ENCODE measurements at regions of chr22 and their contacts with region 1.

Region 1: GRCh38 chr22:50030297-50031188 is 18.0 kb upstream of the IL17REL start:
- DNase-seq: peak; percentile 57 to 82 (median 76)
- H3K4me3 ChIP-seq: no peak overlapping the region
- H3K27ac ChIP-seq: no peak overlapping the region
- H3K4me1 ChIP-seq: no peaks in the 10 kb centered on the region
- H3K27me3 ChIP-seq: no peaks in the 10 kb centered on the region
- CTCF ChIP-seq: peak; percentile 74 to 94 (median 88)
- POLR2A ChIP-seq: no peak

Region 2: GRCh38 chr22:49767355-49768062 is 263.0 kb before region 1 on chr22:
- intact Hi-C with region 1: loop called in 1 of 2 experiments (anchors 10 kb)
- DNase-seq: peak in 3 of 7 donors; percentile 23 to 51 (median 33)
- H3K4me3 ChIP-seq: no peak overlapping the region
- H3K27ac ChIP-seq: no peak overlapping the region
- H3K4me1 ChIP-seq: peaks cover 0 to 5% of the 10 kb centered on the region in 2 donors
- H3K27me3 ChIP-seq: no peaks in the 10 kb centered on the region
- CTCF ChIP-seq: peak in 5 of 6 experiments; percentile 49 to 72 (median 71)
- POLR2A ChIP-seq: no peak